B cell (primary cell): ENCODE measurements at regions of chr17 and their contacts with region 1.

Region 1: GRCh38 chr17:36148559-36149295 is 27.7 kb downstream of the TBC1D3B start:
- DNase-seq: peak; percentile 83
- ATAC-seq: peak; percentile 86
- H3K4me3 ChIP-seq: no peak overlapping the region
- H3K4me3 Mint-ChIP-seq: no peak overlapping the region
- H3K27ac ChIP-seq: no peak overlapping the region
- H3K27ac Mint-ChIP-seq: peak overlapping the region; percentile 5
- H3K4me1 ChIP-seq: peaks cover 15 to 21% of the 10 kb centered on the region in 2 donors
- H3K4me1 Mint-ChIP-seq: peaks cover 40% of the 10 kb centered on the region
- H3K27me3 ChIP-seq: peaks cover 0 to 11% (median 0%) of the 10 kb centered on the region in 4 experiments
- H3K27me3 Mint-ChIP-seq: peaks cover 11% of the 10 kb centered on the region
- CTCF ChIP-seq: peak; percentile 100

Region 2: GRCh38 chr17:35969558-35970380 is 179.0 kb before region 1 on chr17:
- CTCF ChIA-PET with region 1: interaction called, 639 read pairs
- POLR2A ChIA-PET with region 1: no interaction called
- intact Hi-C with region 1: loop called (anchors 1 kb)
- DNase-seq: peak; percentile 84
- ATAC-seq: peak; percentile 60
- H3K4me3 ChIP-seq: no peak overlapping the region
- H3K4me3 Mint-ChIP-seq: no peak overlapping the region
- H3K27ac ChIP-seq: no peak overlapping the region
- H3K27ac Mint-ChIP-seq: no peak overlapping the region
- H3K4me1 ChIP-seq: no peaks in the 10 kb centered on the region
- H3K4me1 Mint-ChIP-seq: peaks cover 1% of the 10 kb centered on the region
- H3K27me3 ChIP-seq: no peaks in the 10 kb centered on the region
- H3K27me3 Mint-ChIP-seq: peaks cover 21% of the 10 kb centered on the region
- CTCF ChIP-seq: peak; percentile 92

Region 3: GRCh38 chr17:36017799-36018198 is 130.9 kb before region 1 on chr17 and contains the start of gene CCL23:
- CTCF ChIA-PET with region 1: interaction called, 17 read pairs
- POLR2A ChIA-PET with region 1: no interaction called
- intact Hi-C with region 1: no loop called
- DNase-seq: peak; percentile 24
- ATAC-seq: peak; percentile 21
- H3K4me3 ChIP-seq: no peak within 1 kb of the TSS
- H3K4me3 Mint-ChIP-seq: no peak within 1 kb of the TSS
- H3K27ac ChIP-seq: peak within 1 kb of the TSS in 1 of 2 donors; percentile 5
- H3K27ac Mint-ChIP-seq: no peak within 1 kb of the TSS
- H3K4me1 ChIP-seq: peaks cover 12 to 15% of the 10 kb centered on the region in 2 donors
- H3K4me1 Mint-ChIP-seq: peaks cover 14% of the 10 kb centered on the region
- H3K27me3 ChIP-seq: no peaks in the 10 kb centered on the region
- H3K27me3 Mint-ChIP-seq: peaks cover 11% of the 10 kb centered on the region
- CTCF ChIP-seq: no peak
- total RNA-seq, gene CCL23: not detected in 2 replicates

Region 4: GRCh38 chr17:36089888-36090836 is 58.6 kb before region 1 on chr17 and contains the start of gene CCL3:
- CTCF ChIA-PET with region 1: interaction called, 11 read pairs
- POLR2A ChIA-PET with region 1: no interaction called
- intact Hi-C with region 1: loop called (anchors 2 kb)
- DNase-seq: peak; percentile 84
- ATAC-seq: peak; percentile 79
- H3K4me3 ChIP-seq: peak within 1 kb of the TSS; percentile 32 to 43 (median 36)
- H3K4me3 Mint-ChIP-seq: peak within 1 kb of the TSS; percentile 89
- H3K27ac ChIP-seq: peak within 1 kb of the TSS; percentile 58 to 85
- H3K27ac Mint-ChIP-seq: peak within 1 kb of the TSS; percentile 87
- H3K4me1 ChIP-seq: peaks cover 50 to 55% of the 10 kb centered on the region in 2 donors
- H3K4me1 Mint-ChIP-seq: peaks cover 70% of the 10 kb centered on the region
- H3K27me3 ChIP-seq: no peaks in the 10 kb centered on the region
- H3K27me3 Mint-ChIP-seq: no peaks in the 10 kb centered on the region
- CTCF ChIP-seq: no peak
- total RNA-seq, gene CCL3: 4.5 and 5.7 TPM in 2 replicates

Region 5: GRCh38 chr17:36127199-36127893 is 21.4 kb before region 1 on chr17:
- CTCF ChIA-PET with region 1: interaction called, 71 read pairs
- POLR2A ChIA-PET with region 1: no interaction called
- intact Hi-C with region 1: no loop called
- DNase-seq: peak; percentile 80
- ATAC-seq: peak; percentile 93
- H3K4me3 ChIP-seq: peak overlapping the region in 4 of 5 experiments; percentile 22 to 41 (median 31)
- H3K4me3 Mint-ChIP-seq: peak overlapping the region; percentile 79
- H3K27ac ChIP-seq: peak overlapping the region; percentile 71 to 89
- H3K27ac Mint-ChIP-seq: peak overlapping the region; percentile 86
- H3K4me1 ChIP-seq: peaks cover 64 to 71% of the 10 kb centered on the region in 2 donors
- H3K4me1 Mint-ChIP-seq: peaks cover 62% of the 10 kb centered on the region
- H3K27me3 ChIP-seq: no peaks in the 10 kb centered on the region
- H3K27me3 Mint-ChIP-seq: no peaks in the 10 kb centered on the region
- CTCF ChIP-seq: no peak

Region 6: GRCh38 chr17:36486204-36487194 is 337.8 kb after region 1 on chr17 and contains the start of gene ZNHIT3:
- CTCF ChIA-PET with region 1: interaction called, 17 read pairs
- POLR2A ChIA-PET with region 1: no interaction called
- intact Hi-C with region 1: loop called (anchors 1 kb)
- DNase-seq: peak; percentile 93
- ATAC-seq: peak; percentile 89
- H3K4me3 ChIP-seq: peak within 1 kb of the TSS; percentile 59 to 95 (median 86)
- H3K4me3 Mint-ChIP-seq: peak within 1 kb of the TSS; percentile 99
- H3K27ac ChIP-seq: peak within 1 kb of the TSS; percentile 56 to 83
- H3K27ac Mint-ChIP-seq: peak within 1 kb of the TSS; percentile 99
- H3K4me1 ChIP-seq: peaks cover 31 to 38% of the 10 kb centered on the region in 2 donors
- H3K4me1 Mint-ChIP-seq: peaks cover 44% of the 10 kb centered on the region
- H3K27me3 ChIP-seq: peaks cover 0 to 16% (median 13%) of the 10 kb centered on the region in 4 experiments
- H3K27me3 Mint-ChIP-seq: peaks cover 10% of the 10 kb centered on the region
- CTCF ChIP-seq: no peak
- total RNA-seq, gene ZNHIT3: 50.5 and 53.3 TPM in 2 replicates